Activated CD8-positive, alpha-beta memory T cell treated with anti-CD3 and anti-CD28 coated beads, Interleukin-2, amount 10 ng/mL, durations not matched to agents 7 days and 5 days (primary cell): ENCODE measurements at regions of chr17 and their contacts with region 1.

Region 1: DNA sequence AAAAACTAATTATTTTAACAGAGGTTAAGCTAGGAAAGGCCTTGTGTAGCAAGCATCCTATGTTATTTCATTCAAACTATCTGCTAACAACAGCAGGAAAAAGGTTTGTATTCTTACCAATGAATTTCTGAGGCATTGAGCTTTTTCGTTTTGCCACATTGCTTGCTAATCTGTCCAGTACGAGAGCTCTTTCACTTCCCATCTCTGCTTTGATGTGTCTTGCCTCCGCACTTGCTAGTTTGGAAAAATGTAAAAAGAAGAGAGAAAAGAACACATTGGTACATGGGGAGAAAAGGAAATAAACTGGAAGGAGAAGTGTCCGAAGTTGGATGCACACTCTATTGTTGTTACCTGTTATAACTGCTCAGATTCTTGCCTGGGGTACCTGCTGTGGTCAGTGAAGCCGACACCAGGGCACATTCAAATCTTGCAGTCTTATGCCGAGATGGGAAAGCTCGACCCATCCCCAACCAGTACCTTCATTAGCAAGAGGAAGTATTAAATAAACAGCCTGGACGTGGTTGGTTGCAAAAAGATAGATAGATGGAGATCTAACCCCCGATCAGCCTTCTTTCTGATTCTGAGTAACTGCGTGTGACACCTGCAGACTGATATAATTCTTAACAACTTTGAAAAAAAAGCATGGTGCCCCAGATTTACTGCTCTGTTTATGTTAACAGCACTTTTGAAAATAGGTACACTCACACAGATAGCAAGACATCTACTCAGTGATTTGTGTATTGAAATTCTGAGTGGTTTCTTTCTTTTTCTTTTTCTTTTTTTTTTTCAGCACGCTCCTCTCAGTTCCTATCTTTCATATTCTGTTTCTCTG is 40.0 kb downstream of the GRB7 start:
- DNase-seq: no peak
- ATAC-seq: peak; percentile 50
- H3K4me3 Mint-ChIP-seq: peak overlapping the region; percentile 89
- H3K27ac Mint-ChIP-seq: peak overlapping the region; percentile 92
- H3K4me1 Mint-ChIP-seq: peaks cover 81% of the 10 kb centered on the region
- H3K27me3 Mint-ChIP-seq: no peaks in the 10 kb centered on the region

Region 2: DNA sequence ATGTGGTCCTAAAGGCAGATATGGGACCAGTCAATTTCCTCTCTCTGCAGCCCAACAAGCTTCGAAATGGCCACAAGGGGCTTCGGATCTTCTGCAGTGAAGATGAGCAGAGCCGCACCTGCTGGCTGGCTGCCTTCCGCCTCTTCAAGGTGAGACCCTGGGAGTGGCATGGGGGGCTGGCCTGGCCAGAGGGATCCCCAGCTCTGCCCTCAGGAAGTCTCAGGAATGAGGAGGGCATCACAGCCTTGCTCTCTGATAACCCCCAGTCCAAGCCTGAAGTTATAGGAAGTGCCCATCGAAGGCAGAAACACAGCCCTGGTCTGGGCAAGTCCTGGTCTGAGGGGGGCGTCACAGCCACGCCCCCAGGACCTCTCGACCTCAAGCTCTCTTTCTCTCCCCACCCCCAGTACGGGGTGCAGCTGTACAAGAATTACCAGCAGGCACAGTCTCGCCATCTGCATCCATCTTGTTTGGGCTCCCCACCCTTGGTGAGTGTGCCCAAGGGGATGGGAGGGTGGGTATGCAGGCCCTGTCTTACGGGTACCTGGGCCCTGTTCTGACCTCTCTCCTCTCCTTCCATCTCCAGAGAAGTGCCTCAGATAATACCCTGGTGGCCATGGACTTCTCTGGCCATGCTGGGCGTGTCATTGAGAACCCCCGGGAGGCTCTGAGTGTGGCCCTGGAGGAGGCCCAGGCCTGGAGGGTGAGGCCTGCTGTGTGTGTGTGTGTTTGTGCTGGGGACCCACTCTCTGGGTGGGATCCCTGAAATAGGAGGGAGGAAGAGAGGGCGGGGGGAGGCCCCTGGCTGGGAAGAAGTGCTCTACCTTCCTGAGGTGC is 32.7 kb before region 1 on chr17:
- CTCF ChIA-PET with region 1: no interaction called
- DNase-seq: no peak
- ATAC-seq: no peak
- H3K4me3 Mint-ChIP-seq: no peak overlapping the region
- H3K27ac Mint-ChIP-seq: no peak overlapping the region
- H3K4me1 Mint-ChIP-seq: peaks cover 5% of the 10 kb centered on the region
- H3K27me3 Mint-ChIP-seq: peaks cover 6% of the 10 kb centered on the region

Region 3: GRCh38 chr17:39863918-39864746 is 86.4 kb after region 1 on chr17 and contains the start of gene IKZF3:
- CTCF ChIA-PET with region 1: interaction called, 16 read pairs
- DNase-seq: peak; percentile 87
- ATAC-seq: peak; percentile 60
- H3K4me3 Mint-ChIP-seq: peak within 1 kb of the TSS; percentile 81
- H3K27ac Mint-ChIP-seq: peak within 1 kb of the TSS; percentile 94
- H3K4me1 Mint-ChIP-seq: peaks cover 58% of the 10 kb centered on the region
- H3K27me3 Mint-ChIP-seq: peaks cover 4% of the 10 kb centered on the region
- total RNA-seq, gene IKZF3: 70.8 to 119 TPM